ENCODE measurements at regions of chr7 and their contacts with region 1.

Region 1: DNA sequence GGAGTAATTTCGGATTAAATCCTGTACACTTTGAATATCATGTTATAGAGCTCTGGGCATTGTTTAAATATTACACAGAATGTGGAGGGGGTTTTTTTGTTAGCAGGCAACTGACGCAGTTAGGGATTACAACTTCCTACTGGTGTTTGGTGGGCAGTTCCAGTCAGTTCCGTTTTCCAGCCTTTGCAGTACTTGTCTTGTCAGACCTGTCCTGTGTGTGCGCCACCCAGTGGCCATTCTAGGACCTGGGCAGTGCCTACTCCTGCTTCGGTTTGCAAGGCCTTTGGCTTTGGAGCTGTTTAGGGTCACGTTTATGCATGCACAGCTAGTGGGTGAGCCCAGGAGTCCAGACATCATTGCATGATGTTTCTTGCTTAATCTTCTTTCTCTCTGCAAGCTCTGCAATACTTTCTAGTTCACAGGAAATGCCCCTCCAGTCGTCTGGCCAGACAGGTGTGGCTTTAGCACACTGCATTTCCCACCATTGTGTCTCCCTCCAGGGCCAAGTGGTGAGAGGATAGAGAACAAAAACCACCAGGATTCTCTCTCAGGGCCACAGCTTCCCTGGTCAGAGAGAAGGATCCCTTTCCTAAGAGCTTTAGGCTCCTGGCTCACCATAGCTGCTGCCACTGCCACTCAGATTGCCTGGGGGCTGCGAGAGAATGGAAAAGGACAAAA is 96.5 kb upstream of the TARP start:
- DNase-seq: peak; percentile 83
- H3K4me3 ChIP-seq: no peak overlapping the region
- H3K27ac ChIP-seq: peak overlapping the region; percentile 41
- H3K4me1 ChIP-seq: peaks cover 4% of the 10 kb centered on the region
- H3K27me3 ChIP-seq: no peaks in the 10 kb centered on the region
- CTCF ChIP-seq: peak; percentile 94 to 98
- POLR2A ChIP-seq: no peak

Region 2: GRCh38 chr7:37467002-37467401 is 903.0 kb before region 1 on chr7:
- CTCF ChIA-PET with region 1: no interaction called
- POLR2A ChIA-PET with region 1: no interaction called
- dilution Hi-C with region 1: no loop called
- intact Hi-C with region 1: no loop called
- DNase-seq: no peak
- H3K4me3 ChIP-seq: no peak overlapping the region
- H3K27ac ChIP-seq: no peak overlapping the region
- H3K4me1 ChIP-seq: peaks cover 3% of the 10 kb centered on the region
- H3K27me3 ChIP-seq: no peaks in the 10 kb centered on the region
- CTCF ChIP-seq: no peak
- POLR2A ChIP-seq: no peak

Region 3: DNA sequence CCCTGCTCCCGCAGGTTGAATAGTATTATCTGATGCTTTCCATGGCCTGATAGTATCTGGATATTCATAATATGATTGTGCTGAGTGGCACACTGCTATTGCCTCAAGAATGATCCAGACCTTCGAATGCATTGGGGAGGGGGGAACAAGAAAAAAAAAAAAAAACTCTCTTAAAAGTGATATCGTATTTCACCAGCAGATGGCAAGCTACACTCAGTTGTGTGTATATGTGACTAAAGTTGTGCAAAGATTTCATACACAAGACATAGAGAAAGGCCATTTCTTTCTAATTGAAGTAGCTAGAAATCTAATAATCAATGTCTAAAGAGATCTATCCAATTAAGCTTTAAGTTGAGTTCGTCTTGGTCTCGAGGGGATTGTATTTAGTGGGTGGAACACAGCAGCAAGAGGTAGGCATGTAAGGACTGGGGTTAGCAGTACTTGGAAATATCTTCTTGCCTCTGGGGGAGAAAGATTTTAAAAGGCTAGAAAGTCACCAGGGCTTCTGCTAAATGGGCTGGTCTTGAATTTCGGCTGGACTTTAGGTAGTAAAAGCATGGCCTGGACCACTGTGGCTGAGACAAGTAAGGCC is 468.6 kb before region 1 on chr7:
- CTCF ChIA-PET with region 1: interaction called, 18 read pairs
- POLR2A ChIA-PET with region 1: no interaction called
- dilution Hi-C with region 1: no loop called
- intact Hi-C with region 1: no loop called
- DNase-seq: peak; percentile 52
- H3K4me3 ChIP-seq: no peak overlapping the region
- H3K27ac ChIP-seq: no peak overlapping the region
- H3K4me1 ChIP-seq: no peaks in the 10 kb centered on the region
- H3K27me3 ChIP-seq: no peaks in the 10 kb centered on the region
- CTCF ChIP-seq: peak; percentile 18 to 35
- POLR2A ChIP-seq: no peak

Region 4: DNA sequence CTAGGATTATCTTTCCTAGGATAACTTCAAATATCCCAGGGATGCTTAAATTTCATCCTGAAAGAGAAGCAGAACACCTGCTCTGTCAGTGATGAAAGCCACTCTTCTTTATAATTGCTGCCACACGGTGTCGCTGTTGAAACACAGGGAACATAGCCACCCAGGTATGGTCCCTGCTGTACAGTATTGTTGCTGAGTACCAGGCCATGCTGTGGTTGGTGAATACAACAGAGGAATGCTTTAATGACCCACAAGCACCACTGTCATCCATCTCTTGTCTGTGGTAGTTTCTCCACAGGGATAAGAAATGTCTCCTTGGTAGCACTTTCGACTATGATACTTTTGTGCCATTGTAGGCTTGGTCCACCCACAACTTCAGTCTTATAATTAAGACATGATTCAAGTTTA is 262.5 kb before region 1 on chr7:
- CTCF ChIA-PET with region 1: interaction called, 30 read pairs
- POLR2A ChIA-PET with region 1: no interaction called
- dilution Hi-C with region 1: no loop called
- intact Hi-C with region 1: loop called (anchors 1 kb)
- DNase-seq: peak; percentile 59
- H3K4me3 ChIP-seq: no peak overlapping the region
- H3K27ac ChIP-seq: no peak overlapping the region
- H3K4me1 ChIP-seq: no peaks in the 10 kb centered on the region
- H3K27me3 ChIP-seq: peaks cover 7 to 31% of the 10 kb centered on the region in 2 experiments
- CTCF ChIP-seq: peak; percentile 59 to 73
- POLR2A ChIP-seq: no peak

Region 5: DNA sequence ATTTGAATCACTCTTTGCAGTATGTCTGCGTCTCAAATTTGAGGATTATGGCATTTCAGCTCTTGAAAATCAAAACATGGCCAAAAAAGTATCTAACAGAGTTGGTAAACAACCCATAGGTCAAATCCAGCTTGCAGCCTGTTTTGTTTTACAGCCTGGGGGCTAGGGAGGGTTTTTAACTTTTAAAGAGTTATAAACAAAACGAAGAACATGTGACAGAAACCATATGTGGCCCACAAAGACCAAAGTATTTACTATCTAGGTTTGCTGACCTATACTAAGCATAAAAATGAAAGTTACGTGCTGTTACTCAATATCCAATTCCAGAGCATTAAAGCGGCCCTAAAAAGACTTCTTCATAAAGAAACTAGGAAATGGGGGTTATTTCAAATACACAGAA is 247.5 kb before region 1 on chr7:
- CTCF ChIA-PET with region 1: no interaction called
- POLR2A ChIA-PET with region 1: no interaction called
- dilution Hi-C with region 1: no loop called
- intact Hi-C with region 1: no loop called
- DNase-seq: no peak
- H3K4me3 ChIP-seq: no peak overlapping the region
- H3K27ac ChIP-seq: no peak overlapping the region
- H3K4me1 ChIP-seq: no peaks in the 10 kb centered on the region
- H3K27me3 ChIP-seq: peaks cover 2 to 9% of the 10 kb centered on the region in 2 experiments
- CTCF ChIP-seq: no peak
- POLR2A ChIP-seq: no peak

Region 6: GRCh38 chr7:38318803-38319416 is 51.0 kb before region 1 on chr7:
- CTCF ChIA-PET with region 1: interaction called, 16 read pairs
- POLR2A ChIA-PET with region 1: no interaction called
- dilution Hi-C with region 1: no loop called
- intact Hi-C with region 1: no loop called
- DNase-seq: peak; percentile 74
- H3K4me3 ChIP-seq: no peak overlapping the region
- H3K27ac ChIP-seq: no peak overlapping the region
- H3K4me1 ChIP-seq: no peaks in the 10 kb centered on the region
- H3K27me3 ChIP-seq: peaks cover 0 to 1% of the 10 kb centered on the region in 2 experiments
- CTCF ChIP-seq: peak; percentile 64 to 67
- POLR2A ChIP-seq: no peak

Region 7: DNA sequence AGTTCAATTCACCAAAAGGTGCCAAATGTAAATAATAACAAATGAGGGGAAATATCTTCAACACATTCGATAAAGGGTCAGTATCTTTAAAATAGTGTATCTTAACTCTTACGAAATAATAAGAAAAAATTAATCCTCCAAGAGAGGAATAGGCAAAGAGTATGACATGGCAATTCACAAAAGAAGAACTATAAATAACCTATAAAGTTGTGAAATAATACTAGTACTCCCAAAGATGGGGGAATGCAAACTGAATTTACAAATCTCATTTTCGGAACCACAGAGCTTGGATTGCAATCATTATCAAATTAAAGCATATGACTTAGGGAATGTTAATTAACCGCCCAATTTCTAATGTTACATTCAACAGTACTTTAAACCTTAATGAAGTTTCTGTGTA is 18.4 kb before region 1 on chr7:
- CTCF ChIA-PET with region 1: interaction called, 10 read pairs
- POLR2A ChIA-PET with region 1: no interaction called
- dilution Hi-C with region 1: no loop called
- intact Hi-C with region 1: no loop called
- DNase-seq: no peak
- H3K4me3 ChIP-seq: no peak overlapping the region
- H3K27ac ChIP-seq: no peak overlapping the region
- H3K4me1 ChIP-seq: peaks cover 4% of the 10 kb centered on the region
- H3K27me3 ChIP-seq: no peaks in the 10 kb centered on the region
- CTCF ChIP-seq: no peak
- POLR2A ChIP-seq: no peak

Region 8: GRCh38 chr7:38391751-38392150 is 21.8 kb after region 1 on chr7:
- CTCF ChIA-PET with region 1: interaction called, 111 read pairs
- POLR2A ChIA-PET with region 1: no interaction called
- dilution Hi-C with region 1: no loop called
- intact Hi-C with region 1: no loop called
- DNase-seq: no peak
- H3K4me3 ChIP-seq: no peak overlapping the region
- H3K27ac ChIP-seq: no peak overlapping the region
- H3K4me1 ChIP-seq: peaks cover 12% of the 10 kb centered on the region
- H3K27me3 ChIP-seq: no peaks in the 10 kb centered on the region
- CTCF ChIP-seq: no peak
- POLR2A ChIP-seq: no peak